CD4-positive, alpha-beta memory T cell (primary cell): ENCODE measurements at regions of chr16 and their contacts with region 1.

Region 1: GRCh38 chr16:83926726-83927397 is 26.2 kb upstream of the OSGIN1 start:
- DNase-seq: peak in 4 of 5 donors; percentile 27 to 41 (median 34)
- H3K4me3 ChIP-seq: no peak overlapping the region
- H3K4me3 Mint-ChIP-seq: no peak overlapping the region
- H3K27ac ChIP-seq: no peak overlapping the region
- H3K27ac Mint-ChIP-seq: peak overlapping the region in 1 of 7 donors; percentile 76
- H3K4me1 ChIP-seq: no peaks in the 10 kb centered on the region
- H3K4me1 Mint-ChIP-seq: peaks cover 2 to 4% (median 4%) of the 10 kb centered on the region in 4 donors
- H3K27me3 ChIP-seq: no peaks in the 10 kb centered on the region
- H3K27me3 Mint-ChIP-seq: no peaks in the 10 kb centered on the region

Region 2: DNA sequence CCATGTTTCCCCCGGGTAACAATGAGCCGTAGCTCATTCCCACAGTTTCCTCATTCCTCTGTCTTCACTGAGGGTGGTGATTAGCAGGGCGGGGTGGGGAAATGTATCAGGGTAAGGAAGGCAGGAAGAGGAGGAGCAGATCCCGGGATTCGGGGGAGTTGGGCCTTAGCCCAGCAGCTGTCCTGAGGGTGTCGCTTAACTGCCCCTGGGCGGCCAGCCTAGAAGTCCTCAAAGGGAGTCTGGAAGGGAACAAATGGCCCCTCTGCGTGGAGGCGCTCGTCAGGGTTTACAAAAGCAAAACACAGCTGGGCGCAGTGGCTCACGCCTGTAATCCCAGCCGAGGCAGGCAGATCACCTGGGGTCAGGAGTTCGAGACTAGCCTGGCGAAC is 13.6 kb before region 1 on chr16:
- CTCF ChIA-PET with region 1: interaction called, 38 read pairs
- POLR2A ChIA-PET with region 1: no interaction called
- intact Hi-C with region 1: no loop called
- DNase-seq: no peak
- H3K4me3 ChIP-seq: no peak overlapping the region
- H3K4me3 Mint-ChIP-seq: no peak overlapping the region
- H3K27ac ChIP-seq: no peak overlapping the region
- H3K27ac Mint-ChIP-seq: no peak overlapping the region
- H3K4me1 ChIP-seq: no peaks in the 10 kb centered on the region
- H3K4me1 Mint-ChIP-seq: peaks cover 0 to 11% (median 4%) of the 10 kb centered on the region in 4 donors
- H3K27me3 ChIP-seq: no peaks in the 10 kb centered on the region
- H3K27me3 Mint-ChIP-seq: no peaks in the 10 kb centered on the region